Activated CD4-positive, alpha-beta T cell treated with anti-CD3 and anti-CD28 coated beads for 36 hours (primary cell): ENCODE measurements at regions of chr3 and their contacts with region 1.

Region 1: GRCh38 chr3:67357610-67358458 is 296.6 kb downstream of the SUCLG2 start:
- DNase-seq: no peak
- ATAC-seq: no peak
- H3K4me3 Mint-ChIP-seq: no peak overlapping the region
- H3K27ac Mint-ChIP-seq: no peak overlapping the region
- H3K4me1 Mint-ChIP-seq: peaks cover 27% of the 10 kb centered on the region
- H3K27me3 Mint-ChIP-seq: no peaks in the 10 kb centered on the region

Region 2: GRCh38 chr3:67329358-67329757 is 28.5 kb before region 1 on chr3:
- CTCF ChIA-PET with region 1: interaction called, 3 read pairs
- POLR2A ChIA-PET with region 1: no interaction called
- intact Hi-C with region 1: loop called in 1 of 2 experiments (anchors 5 kb)
- DNase-seq: peak; percentile 69
- ATAC-seq: peak; percentile 96
- H3K4me3 Mint-ChIP-seq: no peak overlapping the region
- H3K27ac Mint-ChIP-seq: no peak overlapping the region
- H3K4me1 Mint-ChIP-seq: peaks cover 19% of the 10 kb centered on the region
- H3K27me3 Mint-ChIP-seq: peaks cover 14% of the 10 kb centered on the region

Region 3: GRCh38 chr3:67497746-67498145 is 139.9 kb after region 1 on chr3:
- CTCF ChIA-PET with region 1: no interaction called
- POLR2A ChIA-PET with region 1: no interaction called
- intact Hi-C with region 1: no loop called
- DNase-seq: no peak
- ATAC-seq: no peak
- H3K4me3 Mint-ChIP-seq: no peak overlapping the region
- H3K27ac Mint-ChIP-seq: no peak overlapping the region
- H3K4me1 Mint-ChIP-seq: no peaks in the 10 kb centered on the region
- H3K27me3 Mint-ChIP-seq: no peaks in the 10 kb centered on the region

Region 4: DNA sequence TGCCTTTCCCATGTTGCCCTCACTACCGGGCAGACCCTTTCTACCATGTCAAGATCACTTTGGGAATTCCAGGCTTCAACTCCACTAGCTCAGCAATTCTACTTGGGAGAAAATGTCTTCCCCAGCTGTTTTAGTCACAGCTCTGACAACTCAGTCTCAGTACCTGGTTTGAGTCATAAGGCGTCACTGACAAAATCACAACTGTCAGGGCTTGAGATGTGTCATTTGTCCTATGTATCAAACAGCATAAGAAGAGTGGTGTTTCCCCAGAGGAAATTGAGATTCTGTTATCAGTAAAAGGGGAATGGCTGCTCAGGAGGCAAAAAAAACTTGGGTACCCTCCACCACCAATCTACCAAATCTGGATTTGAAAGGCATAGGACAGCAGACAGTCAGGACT is 891.4 kb after region 1 on chr3:
- CTCF ChIA-PET with region 1: no interaction called
- POLR2A ChIA-PET with region 1: no interaction called
- intact Hi-C with region 1: loop called in 1 of 2 experiments (anchors 5 kb)
- DNase-seq: peak; percentile 48
- ATAC-seq: peak; percentile 99
- H3K4me3 Mint-ChIP-seq: no peak overlapping the region
- H3K27ac Mint-ChIP-seq: no peak overlapping the region
- H3K4me1 Mint-ChIP-seq: peaks cover 10% of the 10 kb centered on the region
- H3K27me3 Mint-ChIP-seq: peaks cover 5% of the 10 kb centered on the region